BJ (cell line): ENCODE measurements at regions of chr13 and their contacts with region 1.

Region 1: DNA sequence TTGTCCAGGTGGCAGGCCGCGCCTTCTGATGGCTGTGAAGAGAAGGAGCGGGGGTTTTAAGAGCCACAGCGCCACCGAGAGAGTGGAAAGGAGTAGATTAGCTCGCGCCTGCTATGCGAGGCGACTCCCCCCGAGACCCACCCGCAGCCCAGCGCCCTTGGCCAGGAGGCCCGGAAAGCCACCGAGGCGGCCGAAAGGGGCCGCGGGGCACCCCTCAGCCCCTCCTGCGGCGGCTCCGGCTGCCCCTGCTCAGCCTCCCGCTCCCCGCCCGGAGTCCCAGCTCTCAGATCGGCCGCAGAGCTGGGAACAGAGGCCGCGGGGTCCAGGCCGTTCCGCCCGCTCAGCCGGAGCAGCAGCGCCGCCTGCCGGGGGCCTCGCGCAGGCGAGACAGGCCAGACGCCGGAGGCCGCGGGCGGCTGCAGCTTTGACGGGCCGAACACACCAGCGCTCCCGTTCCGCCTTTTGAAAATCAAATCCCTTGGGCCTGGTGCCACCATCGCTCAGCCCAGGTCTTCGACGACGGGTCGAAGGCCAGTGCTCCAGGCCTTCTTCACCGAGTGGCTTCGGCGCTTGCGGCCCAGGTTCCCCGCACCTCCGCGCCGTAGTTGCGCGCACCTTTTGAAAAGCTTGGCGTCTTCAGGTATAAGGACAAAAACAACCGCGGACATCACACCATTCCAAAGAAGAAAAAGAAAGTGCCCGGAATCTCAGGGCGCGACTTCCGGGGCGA is 15.3 kb downstream of the CDX2 start:
- DNase-seq: no peak
- H3K4me3 ChIP-seq: peak overlapping the region; percentile 43
- H3K27me3 ChIP-seq: peaks cover 13% of the 10 kb centered on the region
- CTCF ChIP-seq: peak; percentile 55

Region 2: GRCh38 chr13:27868641-27869435 is 85.0 kb before region 1 on chr13:
- CTCF ChIA-PET with region 1: interaction called, 12 read pairs
- POLR2A ChIA-PET with region 1: no interaction called
- DNase-seq: no peak
- H3K4me3 ChIP-seq: no peak overlapping the region
- H3K27me3 ChIP-seq: no peaks in the 10 kb centered on the region; the same call in none of the 2 replicates
- CTCF ChIP-seq: peak; percentile 57

Region 3: DNA sequence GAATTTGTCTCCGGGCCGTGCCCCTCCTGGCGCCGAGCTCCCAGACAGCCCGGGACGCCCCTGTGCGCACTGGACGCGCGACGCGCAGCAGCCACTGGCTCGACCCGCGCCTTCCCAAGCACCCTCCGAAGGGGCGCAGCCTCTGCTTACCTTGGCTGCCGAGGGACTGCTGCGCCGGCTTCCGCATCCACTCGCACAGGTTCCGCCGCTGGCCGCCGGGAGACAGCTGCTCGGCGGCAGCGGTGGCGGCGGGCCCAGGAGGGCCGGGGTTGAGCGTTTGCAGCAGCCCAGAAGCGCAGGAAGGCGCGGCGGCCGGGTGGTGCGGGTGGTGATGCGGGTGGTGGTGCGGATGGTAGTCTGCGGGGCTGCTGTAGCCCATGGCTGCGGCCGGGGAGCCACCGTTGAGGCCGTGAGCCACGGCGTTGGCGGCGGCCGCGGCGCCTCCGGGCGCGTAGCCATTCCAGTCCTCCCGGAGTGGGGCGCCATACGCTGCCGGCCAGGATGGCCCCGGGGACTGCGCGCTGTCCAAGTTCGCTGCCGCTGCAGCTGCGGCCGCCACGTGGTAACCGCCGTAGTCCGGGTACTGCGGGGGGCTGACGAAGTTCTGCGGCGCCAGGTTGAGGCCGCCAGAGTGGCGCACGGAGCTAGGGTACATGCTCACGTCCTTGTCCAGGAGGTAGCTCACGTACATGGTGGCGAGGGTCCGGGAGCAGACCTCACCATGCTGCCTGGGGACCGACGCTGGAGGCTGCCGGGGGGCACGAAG is 14.7 kb after region 1 on chr13:
- CTCF ChIA-PET with region 1: interaction called, 12 read pairs
- POLR2A ChIA-PET with region 1: no interaction called
- DNase-seq: no peak
- H3K4me3 ChIP-seq: no peak overlapping the region
- H3K27me3 ChIP-seq: peaks cover 79% of the 10 kb centered on the region
- CTCF ChIP-seq: no peak

Region 4: GRCh38 chr13:28100150-28101121 is 146.6 kb after region 1 on chr13 and contains the start of gene FLT3:
- CTCF ChIA-PET with region 1: no interaction called
- POLR2A ChIA-PET with region 1: no interaction called
- DNase-seq: no peak
- H3K4me3 ChIP-seq: peak within 1 kb of the TSS; percentile 25
- H3K27me3 ChIP-seq: peaks cover 31% of the 10 kb centered on the region
- CTCF ChIP-seq: no peak
- polyA plus RNA-seq, gene FLT3: 0.01 TPM in 1 of 2 replicates, not detected in the other